Caco-2 (cell line): ENCODE measurements at regions of chr15 and their contacts with region 1.

Region 1: DNA sequence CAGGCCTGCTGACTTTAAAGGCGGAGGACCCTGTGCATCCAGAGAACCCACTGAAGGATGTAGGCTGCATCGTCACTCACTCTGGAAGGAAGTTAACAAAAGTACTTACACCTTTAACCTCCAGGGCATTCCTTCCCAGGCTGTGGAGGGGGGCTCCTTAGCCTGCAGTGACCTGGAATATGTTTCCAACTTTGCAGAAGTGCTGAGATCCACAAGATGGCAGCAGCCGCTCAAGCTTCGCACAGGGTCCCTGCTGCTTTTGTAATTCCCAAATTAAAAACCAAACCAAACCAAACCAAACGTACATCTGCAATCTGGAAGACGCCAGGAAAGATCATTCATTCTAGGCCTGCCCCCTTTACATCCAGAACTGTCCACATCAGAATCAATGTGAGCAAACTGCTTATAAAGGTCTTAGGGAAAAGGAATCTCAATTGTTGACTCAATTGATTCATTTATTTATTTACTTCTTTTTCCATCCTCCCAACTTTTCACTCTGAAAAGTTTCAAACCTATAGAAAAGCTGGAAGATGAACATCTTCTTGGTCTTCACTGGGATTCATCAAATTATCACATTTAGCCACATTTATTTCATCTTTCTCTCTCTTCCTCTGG is 70.5 kb upstream of the KLHL25 start:
- DNase-seq: peak; percentile 50 to 65
- H3K4me3 ChIP-seq: no peak overlapping the region
- H3K4me3 Mint-ChIP-seq: no peak overlapping the region
- H3K27ac Mint-ChIP-seq: no peak overlapping the region
- H3K4me1 ChIP-seq: no peaks in the 10 kb centered on the region
- H3K4me1 Mint-ChIP-seq: no peaks in the 10 kb centered on the region
- H3K27me3 ChIP-seq: no peaks in the 10 kb centered on the region; the same call in 1 of the 2 replicates
- H3K27me3 Mint-ChIP-seq: peaks cover 32% of the 10 kb centered on the region
- CTCF ChIP-seq: peak; percentile 72 to 80

Region 2: DNA sequence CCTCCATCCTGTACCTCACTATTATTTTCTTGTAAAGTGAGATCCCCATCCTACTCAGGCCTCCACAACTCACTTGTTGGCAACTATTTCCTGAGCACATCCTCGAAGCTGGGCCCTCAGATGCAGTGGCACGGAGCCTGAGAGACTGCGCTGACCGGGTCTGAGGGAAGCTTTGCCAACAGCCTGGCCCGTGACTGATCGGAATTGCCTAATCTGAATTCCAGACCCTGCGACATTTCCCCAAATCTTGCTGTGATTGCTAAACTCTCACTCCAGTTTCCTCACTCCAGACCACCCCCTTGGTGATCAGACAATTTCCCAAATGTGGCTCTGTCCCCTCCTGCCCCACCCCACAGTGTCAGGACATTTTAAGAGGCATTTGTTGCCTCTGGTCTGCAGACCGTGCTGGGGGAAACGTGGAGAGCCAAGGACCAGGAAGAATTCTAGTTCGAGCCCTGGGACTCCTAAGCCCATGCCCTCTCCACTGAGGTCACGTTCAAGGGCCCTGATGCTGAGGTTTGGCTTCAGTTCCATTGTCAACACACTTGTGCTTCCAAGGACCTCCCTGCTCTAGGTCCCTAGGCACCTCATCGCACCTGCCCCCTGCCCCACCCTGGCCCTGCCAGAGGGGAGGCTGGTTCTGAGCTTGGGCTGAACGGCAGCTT is 93.3 kb before region 1 on chr15:
- CTCF ChIA-PET with region 1: no interaction called
- POLR2A ChIA-PET with region 1: no interaction called
- intact Hi-C with region 1: no loop called
- DNase-seq: no peak
- H3K4me3 ChIP-seq: no peak overlapping the region
- H3K4me3 Mint-ChIP-seq: no peak overlapping the region
- H3K27ac Mint-ChIP-seq: no peak overlapping the region
- H3K4me1 ChIP-seq: no peaks in the 10 kb centered on the region
- H3K4me1 Mint-ChIP-seq: no peaks in the 10 kb centered on the region
- H3K27me3 ChIP-seq: no peaks in the 10 kb centered on the region
- H3K27me3 Mint-ChIP-seq: no peaks in the 10 kb centered on the region
- CTCF ChIP-seq: no peak

Region 3: DNA sequence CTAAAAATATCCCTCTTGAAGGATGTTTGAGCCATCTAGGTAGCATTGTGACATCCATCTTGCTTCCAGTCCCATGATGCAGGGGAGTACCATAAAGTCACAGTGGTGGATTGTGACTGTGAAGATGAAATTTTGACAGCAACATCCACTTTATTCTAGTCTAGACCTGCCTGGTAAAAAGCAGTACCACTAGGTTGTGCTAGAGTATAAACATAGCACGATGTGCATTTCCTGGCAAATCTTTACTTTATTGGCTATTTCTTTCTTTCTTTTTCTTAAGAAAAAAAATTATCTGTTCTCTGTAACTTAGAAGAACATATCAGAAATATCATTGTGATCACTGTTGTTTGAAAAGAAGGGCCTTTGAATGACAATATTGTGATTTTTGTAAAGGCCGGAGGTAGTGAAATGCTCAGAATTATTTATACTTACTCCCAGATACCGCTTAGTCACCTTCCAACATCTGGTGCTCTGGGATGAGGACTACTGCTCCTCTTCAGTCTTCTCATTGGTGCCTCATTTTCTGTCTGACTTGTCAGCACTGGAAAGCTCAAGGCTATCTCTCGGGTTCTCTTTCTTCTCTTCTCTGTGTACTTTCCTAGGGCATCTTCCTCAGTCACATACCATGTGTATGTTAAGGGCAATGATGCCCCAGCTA is 250.1 kb after region 1 on chr15:
- CTCF ChIA-PET with region 1: no interaction called
- POLR2A ChIA-PET with region 1: no interaction called
- intact Hi-C with region 1: loop called (anchors 2 kb)
- DNase-seq: no peak
- H3K4me3 ChIP-seq: no peak overlapping the region
- H3K4me3 Mint-ChIP-seq: no peak overlapping the region
- H3K27ac Mint-ChIP-seq: no peak overlapping the region
- H3K4me1 ChIP-seq: no peaks in the 10 kb centered on the region
- H3K4me1 Mint-ChIP-seq: no peaks in the 10 kb centered on the region
- H3K27me3 ChIP-seq: no peaks in the 10 kb centered on the region
- H3K27me3 Mint-ChIP-seq: peaks cover 15% of the 10 kb centered on the region
- CTCF ChIP-seq: peak in 1 of 2 experiments; percentile 16

Region 4: GRCh38 chr15:86178845-86179244 is 313.7 kb after region 1 on chr15:
- CTCF ChIA-PET with region 1: no interaction called
- POLR2A ChIA-PET with region 1: no interaction called
- intact Hi-C with region 1: loop called (anchors 1 kb)
- DNase-seq: peak in 1 of 2 experiments; percentile 9
- H3K4me3 ChIP-seq: no peak overlapping the region
- H3K4me3 Mint-ChIP-seq: no peak overlapping the region
- H3K27ac Mint-ChIP-seq: no peak overlapping the region
- H3K4me1 ChIP-seq: no peaks in the 10 kb centered on the region
- H3K4me1 Mint-ChIP-seq: no peaks in the 10 kb centered on the region
- H3K27me3 ChIP-seq: no peaks in the 10 kb centered on the region
- H3K27me3 Mint-ChIP-seq: peaks cover 7% of the 10 kb centered on the region
- CTCF ChIP-seq: peak; percentile 27 to 42

Region 5: DNA sequence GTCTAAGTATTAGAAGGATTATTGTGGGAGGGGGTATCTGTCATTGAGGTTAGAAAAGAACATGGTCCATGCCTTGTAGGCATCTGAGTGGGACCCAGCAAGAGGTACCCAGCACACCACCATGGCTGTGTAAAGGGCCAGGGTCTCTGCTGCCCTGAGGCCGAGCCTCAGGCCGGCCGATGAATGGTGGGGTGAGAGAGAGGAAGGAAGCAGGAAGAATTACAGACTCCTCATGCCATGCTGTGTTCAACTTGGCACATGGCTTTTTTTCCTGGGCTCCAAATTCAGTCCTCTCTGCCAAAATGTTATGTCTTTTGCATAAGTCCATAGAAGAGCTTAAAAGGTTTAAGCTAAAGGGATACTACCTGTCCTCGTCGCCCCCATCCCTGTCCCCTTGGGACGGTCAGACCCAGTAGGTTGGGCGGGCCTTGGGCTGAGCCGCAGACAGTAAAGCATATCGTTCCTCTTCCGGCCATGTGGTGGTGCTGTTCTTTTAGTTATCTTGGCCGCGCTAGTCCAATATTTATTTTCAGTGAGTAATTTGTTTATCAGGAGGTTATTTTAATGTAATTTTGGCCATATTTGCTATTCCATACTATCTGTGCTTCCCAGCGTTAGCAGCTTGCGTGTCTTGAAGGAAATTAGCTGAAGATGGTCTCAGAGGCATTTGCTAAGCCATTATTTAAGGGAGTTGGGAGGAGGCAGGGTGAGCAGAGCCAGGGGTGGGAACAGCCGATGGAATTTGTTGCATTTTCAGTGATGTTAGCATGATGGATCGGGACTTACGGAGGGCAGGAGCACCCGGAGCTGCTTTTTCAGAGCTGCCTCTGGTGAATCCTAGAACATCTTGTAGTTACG is 366.9 kb after region 1 on chr15:
- CTCF ChIA-PET with region 1: no interaction called
- POLR2A ChIA-PET with region 1: no interaction called
- intact Hi-C with region 1: loop called (anchors 10 kb)
- DNase-seq: peak in 1 of 2 experiments; percentile 3
- H3K4me3 ChIP-seq: no peak overlapping the region
- H3K4me3 Mint-ChIP-seq: no peak overlapping the region
- H3K27ac Mint-ChIP-seq: no peak overlapping the region
- H3K4me1 ChIP-seq: no peaks in the 10 kb centered on the region
- H3K4me1 Mint-ChIP-seq: no peaks in the 10 kb centered on the region
- H3K27me3 ChIP-seq: no peaks in the 10 kb centered on the region
- H3K27me3 Mint-ChIP-seq: peaks cover 22% of the 10 kb centered on the region
- CTCF ChIP-seq: peak; percentile 35 to 48